GM12878 (cell line): ENCODE measurements at regions of chr18 and their contacts with region 1.

Region 1: GRCh38 chr18:58970943-58971790 is 106.5 kb downstream of the ZNF532 start:
- DNase-seq: peak; percentile 76
- ATAC-seq: peak; percentile 88
- H3K4me3 ChIP-seq: no peak overlapping the region; the same call in 1 of the 2 replicates
- H3K27ac ChIP-seq: peak overlapping the region; percentile 67
- H3K4me1 ChIP-seq: peaks cover 44% of the 10 kb centered on the region
- H3K27me3 ChIP-seq: no peaks in the 10 kb centered on the region
- CTCF ChIP-seq: no peak
- EP300 ChIP-seq: no peak; a peak in 2 of 4 replicates
- POLR2A ChIP-seq: no peak
- RAD21 ChIP-seq: no peak

Region 2: GRCh38 chr18:58991167-58991798 is 20.1 kb after region 1 on chr18:
- CTCF ChIA-PET with region 1: interaction called, 12 read pairs
- POLR2A ChIA-PET with region 1: no interaction called
- RAD21 ChIA-PET with region 1: interaction called, 6 read pairs
- SMC1A ChIA-PET with region 1: interaction called, 9 read pairs
- in situ Hi-C with region 1: no loop called
- intact Hi-C with region 1: loop called (anchors 1 kb)
- DNase-seq: peak; percentile 76
- ATAC-seq: peak; percentile 96
- H3K4me3 ChIP-seq: no peak overlapping the region
- H3K27ac ChIP-seq: peak overlapping the region; percentile 32
- H3K4me1 ChIP-seq: peaks cover 29% of the 10 kb centered on the region
- H3K27me3 ChIP-seq: no peaks in the 10 kb centered on the region
- CTCF ChIP-seq: no peak
- EP300 ChIP-seq: peak in 1 of 2 experiments; percentile 83; a peak in 3 of 4 replicates
- POLR2A ChIP-seq: no peak
- RAD21 ChIP-seq: no peak

Region 3: DNA sequence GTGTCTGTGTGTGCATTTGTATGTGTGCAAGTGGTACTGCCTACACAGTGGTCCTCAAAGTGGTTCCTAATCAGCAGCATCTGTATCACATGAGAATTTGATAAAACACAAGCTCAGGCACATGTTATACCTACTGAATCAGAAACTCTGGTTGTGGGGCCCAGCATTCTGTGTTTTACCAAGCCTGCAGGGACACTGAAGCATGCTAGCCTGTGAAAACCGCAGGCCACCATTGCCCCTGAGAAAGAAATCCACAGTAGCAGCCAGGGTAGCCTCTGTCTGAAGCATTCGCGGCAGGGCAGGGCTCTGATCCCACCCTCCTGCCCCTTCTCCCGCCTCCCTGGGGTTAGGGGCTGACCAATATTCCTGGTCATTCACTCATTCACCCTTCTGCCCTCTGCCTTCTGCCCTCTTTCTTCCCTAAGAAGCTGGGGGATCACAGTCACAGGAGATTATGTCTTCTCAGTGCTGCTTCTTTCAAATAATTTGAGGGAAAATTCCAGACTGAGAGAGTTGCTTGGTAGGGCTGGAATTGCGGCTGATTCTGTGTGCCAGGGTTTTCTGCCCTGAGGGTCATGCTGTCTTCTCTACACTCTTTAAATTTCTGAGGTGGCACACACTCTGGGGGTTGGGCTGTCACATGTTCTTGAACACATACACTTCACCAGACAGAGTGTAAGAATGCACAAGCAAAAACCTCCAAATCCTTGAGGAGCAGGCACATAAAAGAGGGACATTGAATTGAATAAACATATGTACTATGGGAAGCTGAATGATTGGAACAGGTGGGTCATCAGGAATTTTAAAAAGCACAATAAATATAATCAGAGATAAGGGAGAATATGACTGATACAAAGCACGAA is 41.9 kb after region 1 on chr18:
- CTCF ChIA-PET with region 1: no interaction called
- POLR2A ChIA-PET with region 1: interaction called, 3 read pairs
- RAD21 ChIA-PET with region 1: interaction called, 3 read pairs
- SMC1A ChIA-PET with region 1: interaction called, 33 read pairs
- in situ Hi-C with region 1: no loop called
- intact Hi-C with region 1: no loop called
- DNase-seq: no peak
- ATAC-seq: peak; percentile 86
- H3K4me3 ChIP-seq: no peak overlapping the region
- H3K27ac ChIP-seq: no peak overlapping the region
- H3K4me1 ChIP-seq: peaks cover 22% of the 10 kb centered on the region
- H3K27me3 ChIP-seq: no peaks in the 10 kb centered on the region
- CTCF ChIP-seq: no peak
- EP300 ChIP-seq: no peak
- POLR2A ChIP-seq: no peak
- RAD21 ChIP-seq: no peak

Region 4: GRCh38 chr18:59109375-59109774 is 138.2 kb after region 1 on chr18:
- CTCF ChIA-PET with region 1: no interaction called
- POLR2A ChIA-PET with region 1: no interaction called
- RAD21 ChIA-PET with region 1: no interaction called
- SMC1A ChIA-PET with region 1: no interaction called
- in situ Hi-C with region 1: no loop called
- intact Hi-C with region 1: no loop called
- DNase-seq: no peak
- ATAC-seq: no peak
- H3K4me3 ChIP-seq: no peak overlapping the region
- H3K27ac ChIP-seq: no peak overlapping the region
- H3K4me1 ChIP-seq: no peaks in the 10 kb centered on the region
- H3K27me3 ChIP-seq: peaks cover 3% of the 10 kb centered on the region in 2 experiments; a peak in 2 of 4 replicates
- CTCF ChIP-seq: no peak
- EP300 ChIP-seq: no peak
- POLR2A ChIP-seq: no peak
- RAD21 ChIP-seq: no peak